Activated B cell treated with CpG ODN at 0.5 μM for 24 hours (primary cell): ENCODE measurements at regions of chrX and their contacts with region 1.

Region 1: GRCh38 chrX:38166478-38167083 is 54.1 kb downstream of the SRPX start:
- DNase-seq: no peak
- ATAC-seq: no peak
- H3K4me3 Mint-ChIP-seq: no peak overlapping the region
- H3K27ac Mint-ChIP-seq: no peak overlapping the region
- H3K4me1 Mint-ChIP-seq: no peaks in the 10 kb centered on the region
- H3K27me3 Mint-ChIP-seq: no peaks in the 10 kb centered on the region
- CTCF ChIP-seq: peak; percentile 35

Region 2: GRCh38 chrX:37491686-37492085 is 674.9 kb before region 1 on chrX:
- CTCF ChIA-PET with region 1: interaction called, 10 read pairs
- POLR2A ChIA-PET with region 1: no interaction called
- intact Hi-C with region 1: loop called (anchors 1 kb)
- DNase-seq: no peak
- ATAC-seq: no peak
- H3K4me3 Mint-ChIP-seq: no peak overlapping the region
- H3K27ac Mint-ChIP-seq: no peak overlapping the region
- H3K4me1 Mint-ChIP-seq: no peaks in the 10 kb centered on the region
- H3K27me3 Mint-ChIP-seq: peaks cover 2% of the 10 kb centered on the region
- CTCF ChIP-seq: no peak

Region 3: GRCh38 chrX:37509349-37509748 is 657.2 kb before region 1 on chrX:
- CTCF ChIA-PET with region 1: interaction called, 13 read pairs
- POLR2A ChIA-PET with region 1: no interaction called
- intact Hi-C with region 1: loop called (anchors 2 kb)
- DNase-seq: no peak
- ATAC-seq: no peak
- H3K4me3 Mint-ChIP-seq: no peak overlapping the region
- H3K27ac Mint-ChIP-seq: no peak overlapping the region
- H3K4me1 Mint-ChIP-seq: no peaks in the 10 kb centered on the region
- H3K27me3 Mint-ChIP-seq: no peaks in the 10 kb centered on the region
- CTCF ChIP-seq: no peak

Region 4: DNA sequence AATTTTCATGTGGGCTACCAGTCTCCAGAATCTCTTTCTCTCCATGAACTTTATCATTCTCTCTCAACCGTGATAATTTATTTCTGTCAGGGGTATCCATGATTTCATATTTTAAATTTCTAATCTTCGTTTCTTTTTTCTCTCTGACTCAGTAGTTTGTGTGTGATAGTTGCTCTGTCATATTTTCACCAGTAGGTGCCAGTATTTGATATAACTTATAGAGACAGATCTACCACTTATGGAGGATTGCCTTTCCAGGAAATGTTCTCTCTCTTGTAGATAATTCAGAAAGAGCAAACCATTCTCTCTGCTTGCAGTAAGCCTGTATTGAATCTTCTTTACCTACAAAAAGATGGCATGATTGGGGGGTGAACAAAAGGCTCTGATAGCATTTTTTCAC is 239.9 kb before region 1 on chrX:
- CTCF ChIA-PET with region 1: no interaction called
- POLR2A ChIA-PET with region 1: no interaction called
- intact Hi-C with region 1: loop called (anchors 5 kb)
- DNase-seq: no peak
- ATAC-seq: no peak
- H3K4me3 Mint-ChIP-seq: no peak overlapping the region
- H3K27ac Mint-ChIP-seq: no peak overlapping the region
- H3K4me1 Mint-ChIP-seq: no peaks in the 10 kb centered on the region
- H3K27me3 Mint-ChIP-seq: peaks cover 4% of the 10 kb centered on the region
- CTCF ChIP-seq: no peak

Region 5: DNA sequence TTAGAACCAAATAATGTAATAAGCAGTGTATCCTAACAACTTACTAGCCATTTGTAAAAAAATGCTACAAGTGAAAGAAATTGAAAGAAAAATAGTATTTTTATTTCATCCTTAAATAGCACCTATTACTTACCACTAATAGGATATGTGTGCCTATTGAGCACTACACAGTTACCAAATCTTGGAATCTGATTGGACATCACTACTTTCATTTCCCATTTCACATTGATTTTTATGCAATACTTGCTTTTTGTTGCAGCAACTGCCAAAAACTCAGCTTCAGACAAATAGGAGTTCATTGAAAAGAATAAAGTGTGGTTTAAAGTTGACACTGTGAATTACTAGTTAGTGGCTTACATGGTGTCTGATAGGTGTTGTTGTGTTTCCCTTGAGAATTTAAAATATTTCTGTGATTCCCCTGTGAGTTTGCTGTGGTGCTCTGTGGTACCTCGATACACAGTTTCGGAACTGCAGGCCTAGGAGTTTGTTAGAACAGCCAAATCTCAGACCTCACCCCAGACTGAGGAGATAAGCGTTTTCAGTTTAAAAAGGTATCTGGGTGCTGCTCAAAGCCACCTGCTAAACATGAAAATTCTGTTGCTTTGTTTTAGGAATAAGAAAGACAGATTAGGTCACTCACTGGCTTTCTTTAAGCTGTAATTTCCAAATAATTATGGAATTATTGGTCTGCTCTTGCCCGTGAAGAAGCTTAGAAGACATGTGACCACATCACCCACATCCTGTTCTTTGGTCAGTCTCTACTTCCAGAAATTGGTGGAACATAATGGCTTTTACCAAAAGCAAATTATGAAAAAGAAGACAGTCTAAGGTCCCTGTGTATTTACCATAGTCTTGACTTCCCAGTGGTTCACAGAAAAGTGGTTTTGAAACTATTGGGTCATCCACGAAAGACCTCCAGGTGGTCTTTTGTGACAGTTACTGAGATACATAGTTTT is 62.4 kb before region 1 on chrX:
- CTCF ChIA-PET with region 1: no interaction called
- POLR2A ChIA-PET with region 1: no interaction called
- intact Hi-C with region 1: no loop called
- DNase-seq: no peak
- ATAC-seq: no peak
- H3K4me3 Mint-ChIP-seq: no peak overlapping the region
- H3K27ac Mint-ChIP-seq: no peak overlapping the region
- H3K4me1 Mint-ChIP-seq: peaks cover 2% of the 10 kb centered on the region
- H3K27me3 Mint-ChIP-seq: peaks cover 1% of the 10 kb centered on the region
- CTCF ChIP-seq: no peak

Region 6: DNA sequence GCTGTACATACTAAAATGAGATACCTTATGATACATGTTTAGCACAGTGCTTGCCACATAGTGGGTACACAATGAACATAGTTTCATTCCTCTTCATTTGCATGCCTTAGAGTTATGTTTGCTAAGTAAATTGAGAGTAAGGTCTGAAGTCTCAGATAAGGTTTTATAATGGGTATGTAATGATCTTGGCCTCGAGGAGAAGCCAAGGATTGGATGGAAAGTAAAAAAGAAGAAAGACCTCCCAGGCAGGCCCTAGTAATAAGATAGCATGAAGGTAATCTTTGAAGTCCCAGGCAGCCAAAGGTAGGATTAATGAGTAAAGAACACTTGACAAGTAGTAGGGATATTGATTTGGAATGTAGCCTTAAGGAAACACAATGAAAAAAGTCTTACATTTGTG is 339.0 kb after region 1 on chrX:
- CTCF ChIA-PET with region 1: no interaction called
- POLR2A ChIA-PET with region 1: no interaction called
- intact Hi-C with region 1: no loop called
- DNase-seq: no peak
- ATAC-seq: no peak
- H3K4me3 Mint-ChIP-seq: no peak overlapping the region
- H3K27ac Mint-ChIP-seq: no peak overlapping the region
- H3K4me1 Mint-ChIP-seq: no peaks in the 10 kb centered on the region
- H3K27me3 Mint-ChIP-seq: no peaks in the 10 kb centered on the region
- CTCF ChIP-seq: no peak